ENCODE measurements at regions of chr1 and their contacts with region 1.

Region 1: GRCh38 chr1:67214420-67215174 is 48.3 kb downstream of the IL23R start:
- DNase-seq: peak; percentile 11
- H3K4me3 ChIP-seq: no peak overlapping the region
- CTCF ChIP-seq: peak; percentile 70

Region 2: GRCh38 chr1:67314696-67315095 is 100.1 kb after region 1 on chr1:
- in situ Hi-C with region 1: loop called (anchors 5 kb)
- DNase-seq: no peak
- H3K4me3 ChIP-seq: no peak overlapping the region
- CTCF ChIP-seq: no peak

Measured in astrocyte of the cerebellum (primary cell).